ENCODE measurements at regions of chr20 and their contacts with region 1.

Region 1: DNA sequence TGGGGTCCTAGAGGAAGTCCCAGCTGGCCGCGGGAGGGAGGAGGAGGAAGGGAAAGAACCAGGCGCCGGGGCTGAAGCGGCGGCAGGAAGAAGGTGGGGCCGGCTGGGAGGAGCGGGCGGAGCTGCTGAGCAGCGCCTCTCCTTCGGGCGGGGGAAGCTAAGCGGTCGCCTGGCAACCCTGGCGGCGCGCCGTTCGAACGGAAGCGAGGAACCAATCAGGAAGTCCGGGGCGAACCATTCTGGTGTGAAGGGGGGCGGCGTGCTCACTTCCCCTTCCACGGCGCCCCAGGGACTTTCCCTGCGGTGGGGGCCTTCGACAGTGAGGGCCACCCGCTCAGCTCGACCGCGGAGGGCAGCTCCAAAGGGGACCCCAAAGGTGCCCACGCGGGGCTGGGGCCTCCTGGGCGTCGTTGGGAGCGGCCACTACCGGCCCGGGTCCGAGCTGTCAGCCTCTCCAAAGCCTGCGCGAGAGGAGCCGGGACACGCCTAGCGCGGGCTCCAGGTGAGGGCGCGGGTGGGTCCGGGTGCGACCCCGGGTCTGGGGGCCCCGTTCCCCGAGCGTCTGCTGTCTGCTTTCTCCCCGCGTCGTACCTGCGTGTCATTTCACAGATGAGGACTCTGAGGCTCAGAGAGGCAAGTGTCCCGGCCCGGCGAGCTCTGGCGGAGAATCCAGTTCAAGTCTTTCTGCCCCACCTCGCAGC is at the start of gene FAM110A:
- DNase-seq: peak; percentile 91
- ATAC-seq: peak; percentile 97
- H3K4me3 ChIP-seq: peak within 1 kb of the TSS; percentile 67
- H3K27ac ChIP-seq: peak within 1 kb of the TSS; percentile 85
- H3K4me1 ChIP-seq: peaks cover 10% of the 10 kb centered on the region; the same call in 1 of the 2 replicates
- H3K27me3 ChIP-seq: no peaks in the 10 kb centered on the region
- CTCF ChIP-seq: no peak
- POLR2A ChIP-seq: no peak; the same call in 1 of the 2 replicates
- RAD21 ChIP-seq: no peak
- total RNA-seq, gene FAM110A: 0.36 and 0.56 TPM in 2 replicates

Region 2: DNA sequence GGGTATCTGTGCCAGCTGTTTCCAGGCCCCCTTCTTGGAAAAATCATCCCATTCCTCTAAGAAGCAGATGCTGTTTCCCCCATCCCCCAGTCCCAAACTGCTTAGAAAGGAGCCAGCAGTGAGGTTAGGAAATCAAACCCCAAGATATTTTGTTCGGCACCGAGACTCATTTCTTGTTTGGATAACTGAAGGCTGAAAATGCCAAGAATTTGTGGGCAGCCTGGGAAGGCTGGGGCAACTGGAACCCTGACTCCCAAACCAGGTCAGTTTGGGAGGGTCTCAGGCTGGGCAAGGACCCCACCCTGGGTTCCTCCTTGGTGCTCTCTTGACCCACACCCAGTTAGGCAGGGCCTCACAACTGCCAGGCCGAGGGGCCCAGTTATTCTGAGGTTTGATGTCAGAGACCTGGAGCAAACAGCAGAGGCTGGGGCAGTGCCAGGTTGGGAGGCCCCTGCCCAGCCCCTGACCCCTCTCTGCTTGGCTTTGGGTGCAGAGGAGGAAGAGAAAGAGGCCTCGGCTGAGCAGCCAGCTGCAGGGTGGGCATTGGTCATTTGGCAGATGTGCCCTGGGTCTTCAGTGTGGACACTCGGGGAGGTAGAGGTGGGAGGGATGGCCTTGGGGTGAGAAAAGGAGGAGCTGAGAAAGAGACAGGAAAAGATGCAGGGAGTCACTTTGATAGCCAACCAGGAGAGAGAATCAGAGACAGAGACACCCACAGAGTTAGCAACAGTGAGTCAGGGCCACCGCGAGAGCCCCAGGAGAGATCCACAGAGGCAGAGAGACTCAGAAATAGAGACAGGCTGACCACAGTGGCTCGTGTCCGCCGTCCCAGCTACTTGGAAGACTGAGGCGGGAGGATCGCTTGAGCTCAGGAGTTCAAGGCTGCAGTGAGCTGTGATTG is 77.5 kb after region 1 on chr20:
- CTCF ChIA-PET with region 1: no interaction called
- POLR2A ChIA-PET with region 1: no interaction called
- dilution Hi-C with region 1: no loop called
- in situ Hi-C with region 1: no loop called
- intact Hi-C with region 1: loop called (anchors 1 kb)
- DNase-seq: peak; percentile 10
- ATAC-seq: peak; percentile 77
- H3K4me3 ChIP-seq: no peak overlapping the region
- H3K27ac ChIP-seq: peak overlapping the region; percentile 90
- H3K4me1 ChIP-seq: peaks cover 13% of the 10 kb centered on the region; the same call in 1 of the 2 replicates
- H3K27me3 ChIP-seq: no peaks in the 10 kb centered on the region; the same call in 1 of the 2 replicates
- CTCF ChIP-seq: no peak
- POLR2A ChIP-seq: no peak
- RAD21 ChIP-seq: no peak

Region 3: DNA sequence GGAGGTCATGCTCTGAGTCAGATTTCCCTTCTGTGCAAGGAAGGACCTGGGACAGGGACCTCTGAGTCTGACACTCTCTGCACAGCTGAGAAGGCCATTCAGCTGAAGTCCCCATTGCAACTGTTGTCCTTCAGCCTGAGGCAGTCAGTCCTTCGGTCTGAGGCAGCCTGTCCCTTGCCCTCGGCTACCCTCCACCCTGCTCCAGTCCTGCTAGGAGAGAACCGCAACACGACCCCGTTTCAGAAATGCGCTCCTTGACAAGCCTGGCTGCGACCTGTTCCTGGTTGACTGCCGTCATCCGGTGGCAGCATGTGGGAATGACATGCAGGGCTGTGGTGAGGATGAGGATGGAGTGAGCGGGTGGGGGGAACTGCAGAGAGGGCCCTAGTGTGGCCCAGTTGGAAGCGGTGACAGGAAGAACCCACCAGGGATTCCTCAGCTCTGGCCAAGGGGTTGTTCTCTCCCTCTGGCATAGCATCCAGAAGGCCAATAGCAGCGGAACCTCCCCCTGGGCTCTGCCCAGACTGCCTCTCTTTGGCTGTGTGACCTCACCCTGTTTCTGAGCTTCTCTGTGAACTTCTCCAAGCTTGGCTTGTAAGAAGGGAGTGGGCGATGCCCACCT is 122.8 kb after region 1 on chr20:
- CTCF ChIA-PET with region 1: interaction called, 3 read pairs
- POLR2A ChIA-PET with region 1: no interaction called
- dilution Hi-C with region 1: no loop called
- in situ Hi-C with region 1: no loop called
- intact Hi-C with region 1: loop called (anchors 5 kb)
- DNase-seq: peak; percentile 51
- ATAC-seq: peak; percentile 94
- H3K4me3 ChIP-seq: no peak overlapping the region
- H3K27ac ChIP-seq: no peak overlapping the region
- H3K4me1 ChIP-seq: no peaks in the 10 kb centered on the region
- H3K27me3 ChIP-seq: peaks cover 8% of the 10 kb centered on the region
- CTCF ChIP-seq: peak; percentile 97
- POLR2A ChIP-seq: peak; percentile 57
- RAD21 ChIP-seq: peak; percentile 99

Measured in IMR-90 (cell line).